A549 (cell line): ENCODE measurements at regions of chr2 and their contacts with region 1.

Region 1: GRCh38 chr2:224284134-224284946 is 117.6 kb downstream of the FAM124B start:
- DNase-seq: peak; percentile 10 to 59
- ATAC-seq: peak; percentile 61 to 83
- H3K4me3 ChIP-seq: no peak overlapping the region
- H3K27ac ChIP-seq: peak overlapping the region in 1 of 2 experiments; percentile 18; a peak in 2 of 6 replicates
- H3K4me1 ChIP-seq: no peaks in the 10 kb centered on the region
- CTCF ChIP-seq: peak; percentile 100
- EP300 ChIP-seq: no peak
- POLR2A ChIP-seq: no peak
- RAD21 ChIP-seq: peak; percentile 91 to 99

Region 2: GRCh38 chr2:223976635-223977226 is 307.6 kb before region 1 on chr2:
- CTCF ChIA-PET with region 1: interaction called, 148 read pairs
- POLR2A ChIA-PET with region 1: no interaction called
- DNase-seq: no peak
- ATAC-seq: no peak; a peak in 1 of 6 replicates
- H3K4me3 ChIP-seq: no peak overlapping the region
- H3K27ac ChIP-seq: no peak overlapping the region
- H3K4me1 ChIP-seq: no peaks in the 10 kb centered on the region; the same call in 2 of the 3 replicates
- CTCF ChIP-seq: no peak
- EP300 ChIP-seq: no peak
- POLR2A ChIP-seq: no peak
- RAD21 ChIP-seq: no peak

Region 3: DNA sequence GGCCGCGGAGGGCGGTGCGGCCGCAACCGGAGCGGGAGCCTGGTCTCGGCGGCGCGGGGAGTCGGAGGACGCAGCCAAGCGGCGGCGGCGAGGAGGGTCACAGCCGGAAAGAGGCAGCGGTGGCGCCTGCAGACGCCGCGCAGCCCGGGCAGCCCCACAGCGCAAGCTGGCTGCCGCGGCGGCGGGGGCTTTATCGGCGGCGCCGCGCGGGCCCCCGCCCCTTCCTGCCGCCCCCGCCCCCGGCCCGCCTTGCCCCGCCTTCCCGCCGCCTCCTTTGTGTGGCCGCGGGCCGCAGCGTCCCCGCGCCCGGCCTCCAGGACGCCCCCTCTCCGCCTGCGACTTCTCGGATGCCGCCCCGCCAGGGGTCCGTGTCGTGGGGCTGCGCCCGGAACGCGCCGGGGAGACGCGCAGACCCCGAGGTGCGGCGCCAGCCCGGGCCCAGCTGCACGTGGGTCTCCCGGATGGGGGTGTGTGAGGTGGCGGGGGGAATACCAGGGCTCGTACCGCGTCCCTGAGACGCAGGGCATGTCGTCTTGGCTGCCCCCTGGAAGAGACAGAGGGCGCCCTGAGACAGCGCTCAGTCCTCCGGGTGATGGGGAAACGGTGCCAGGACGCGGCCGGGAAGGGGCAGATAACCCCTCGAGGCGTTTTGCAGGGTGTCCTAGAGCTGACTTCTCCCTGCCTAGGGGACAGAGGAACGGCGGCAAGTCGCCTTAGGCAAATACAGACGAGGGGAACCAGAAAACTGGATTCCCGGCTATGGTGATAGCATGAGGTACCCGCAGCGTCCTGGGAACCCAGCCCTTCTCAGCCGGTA is 245.0 kb before region 1 on chr2 and contains the start of gene SERPINE2:
- CTCF ChIA-PET with region 1: interaction called, 91 read pairs
- POLR2A ChIA-PET with region 1: interaction called, 7 read pairs
- DNase-seq: peak; percentile 82 to 91
- ATAC-seq: peak; percentile 88 to 89
- H3K4me3 ChIP-seq: peak within 1 kb of the TSS; percentile 76
- H3K27ac ChIP-seq: peak within 1 kb of the TSS; percentile 90 to 93
- H3K4me1 ChIP-seq: peaks cover 22% of the 10 kb centered on the region
- CTCF ChIP-seq: peak; percentile 76
- EP300 ChIP-seq: no peak
- POLR2A ChIP-seq: peak; percentile 95
- RAD21 ChIP-seq: peak; percentile 94 to 98
- polyA plus RNA-seq, gene SERPINE2: 58.6 and 94.6 TPM in 2 replicates

Region 4: DNA sequence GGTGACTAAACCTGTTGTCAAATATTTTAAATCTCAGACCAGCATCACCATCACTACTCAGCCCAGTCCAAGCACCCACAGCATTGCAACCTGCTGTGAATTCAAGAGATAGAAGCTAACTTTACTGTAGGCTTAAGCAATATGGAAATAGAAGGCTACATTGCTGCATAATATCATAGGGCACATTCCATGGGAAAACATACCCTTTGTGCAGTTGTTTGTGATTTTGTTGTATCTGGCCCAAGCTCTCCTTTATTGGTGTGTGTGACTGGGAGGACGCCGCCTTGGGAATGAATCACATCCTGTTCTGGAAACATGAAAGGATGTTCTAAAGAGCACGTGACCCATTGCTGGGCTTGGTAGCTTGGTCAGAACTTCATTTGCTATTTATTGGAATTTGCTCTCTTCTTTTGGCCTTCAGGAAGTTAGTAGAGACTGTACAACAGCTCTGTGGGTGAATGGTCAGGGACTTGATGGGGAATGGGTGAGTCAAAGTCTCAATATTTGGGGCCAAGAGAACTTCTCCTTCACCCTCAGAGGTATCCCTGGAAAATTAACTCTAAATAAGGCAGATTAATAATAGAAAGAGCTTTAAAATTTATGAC is 138.5 kb before region 1 on chr2:
- CTCF ChIA-PET with region 1: interaction called, 12 read pairs
- POLR2A ChIA-PET with region 1: no interaction called
- DNase-seq: peak; percentile 35 to 83
- ATAC-seq: peak; percentile 75 to 78
- H3K4me3 ChIP-seq: no peak overlapping the region
- H3K27ac ChIP-seq: peak overlapping the region; percentile 67 to 74
- H3K4me1 ChIP-seq: peaks cover 67% of the 10 kb centered on the region
- CTCF ChIP-seq: no peak
- EP300 ChIP-seq: no peak; a peak in 2 of 5 replicates
- POLR2A ChIP-seq: no peak
- RAD21 ChIP-seq: no peak; a peak in 1 of 5 replicates

Region 5: GRCh38 chr2:224268441-224268840 is 15.9 kb before region 1 on chr2:
- CTCF ChIA-PET with region 1: interaction called, 43 read pairs
- POLR2A ChIA-PET with region 1: no interaction called
- DNase-seq: peak; percentile 29 to 84
- ATAC-seq: peak; percentile 92 to 94
- H3K4me3 ChIP-seq: 0 out of 3 replicates have a peak overlapping the region, but pooled peaks have one; percentile 12
- H3K27ac ChIP-seq: peak overlapping the region; percentile 70 to 78
- H3K4me1 ChIP-seq: peaks cover 57% of the 10 kb centered on the region
- CTCF ChIP-seq: no peak
- EP300 ChIP-seq: no peak
- POLR2A ChIP-seq: no peak
- RAD21 ChIP-seq: no peak; a peak in 1 of 5 replicates

Region 6: DNA sequence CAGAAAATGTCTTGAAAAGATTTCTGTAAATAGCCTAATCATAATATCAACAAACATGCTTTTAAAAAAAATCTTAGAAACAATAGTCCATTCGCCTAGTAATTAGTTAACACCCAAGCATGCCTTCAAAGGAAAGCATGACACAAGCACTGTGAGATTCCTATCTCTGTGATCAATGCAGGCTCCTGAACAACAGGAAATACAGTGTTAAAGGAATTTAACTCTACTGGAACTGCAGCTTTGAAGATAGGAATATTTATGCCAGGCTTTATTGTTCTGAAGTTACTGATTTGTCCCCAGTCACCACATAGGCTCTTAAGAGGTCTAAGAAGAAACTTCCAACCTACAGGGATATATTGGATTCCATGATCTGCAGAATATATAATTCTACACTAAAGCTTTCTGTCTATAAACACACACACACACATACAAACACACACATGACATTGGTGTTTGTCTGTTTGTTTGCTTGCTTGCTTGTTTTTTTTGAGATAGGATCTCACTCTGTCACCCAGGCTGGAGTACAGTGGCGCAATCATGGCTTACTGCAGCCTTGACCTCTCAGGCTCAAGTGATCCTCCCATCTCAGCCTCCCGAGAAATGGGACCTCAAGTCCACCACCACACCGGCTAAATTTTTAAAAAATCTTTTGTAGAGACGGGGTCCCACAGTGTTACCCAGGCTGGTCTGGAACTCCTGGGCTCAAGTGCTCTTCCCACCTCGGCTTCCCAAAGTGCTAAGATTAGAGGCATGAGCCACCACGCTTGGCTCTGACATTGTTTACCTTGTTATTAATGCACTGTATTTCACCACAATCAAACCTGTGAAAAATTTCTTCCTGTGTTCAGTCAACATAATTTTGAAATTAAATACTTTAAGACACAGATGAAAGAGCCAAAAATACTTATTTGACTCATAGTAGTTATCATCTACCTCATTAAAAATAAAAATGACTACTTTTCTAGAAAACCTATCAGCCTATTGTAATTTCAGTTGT is 133.3 kb after region 1 on chr2:
- CTCF ChIA-PET with region 1: no interaction called
- POLR2A ChIA-PET with region 1: no interaction called
- DNase-seq: no peak
- ATAC-seq: no peak
- H3K4me3 ChIP-seq: no peak overlapping the region
- H3K27ac ChIP-seq: no peak overlapping the region
- H3K4me1 ChIP-seq: no peaks in the 10 kb centered on the region
- CTCF ChIP-seq: no peak
- EP300 ChIP-seq: no peak
- POLR2A ChIP-seq: no peak
- RAD21 ChIP-seq: no peak